Breast epithelium (tissue), 4 donors: ENCODE measurements at regions of chr6 and their contacts with region 1.

Region 1: DNA sequence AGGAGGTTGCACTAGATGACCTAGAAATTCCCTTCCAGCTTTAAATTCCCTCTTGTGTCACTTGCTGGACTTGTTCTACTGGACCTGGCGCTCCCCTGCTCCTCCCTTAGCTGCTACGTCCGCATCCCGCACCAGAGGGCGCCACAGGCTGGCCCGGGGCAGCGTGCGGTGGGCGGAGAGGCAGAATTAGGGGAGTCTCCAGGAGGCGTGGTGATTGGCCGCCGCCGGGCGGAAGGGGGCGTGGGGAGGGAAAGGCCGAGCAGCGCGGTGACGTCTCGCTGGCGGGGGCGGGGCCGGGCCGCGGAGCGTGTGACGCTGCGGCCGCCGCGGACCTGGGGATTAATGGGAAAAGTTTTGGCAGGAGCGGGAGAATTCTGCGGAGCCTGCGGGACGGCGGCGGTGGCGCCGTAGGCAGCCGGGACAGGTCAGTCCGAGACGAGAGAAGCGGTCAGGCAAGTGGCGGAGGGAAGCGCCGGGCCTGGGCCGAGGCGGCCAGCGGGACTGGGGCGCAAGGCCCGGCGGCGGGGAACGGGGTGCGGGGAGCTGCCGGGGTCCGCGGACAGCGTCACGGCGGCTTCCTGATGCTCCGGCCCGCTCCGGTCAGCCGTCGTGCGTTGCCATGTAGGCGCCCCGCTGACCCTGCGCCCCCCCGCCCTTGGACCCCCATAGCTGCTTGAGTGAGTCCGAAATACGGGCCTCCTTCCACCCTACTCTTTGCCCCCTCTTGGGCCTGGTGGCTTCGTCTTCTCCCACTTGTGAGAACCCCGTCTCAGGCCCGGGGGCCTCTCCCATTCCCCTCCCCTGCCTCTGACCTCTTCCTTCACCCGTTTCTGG is at the start of gene PPARD:
- DNase-seq: peak; percentile 99
- H3K4me3 ChIP-seq: peak within 1 kb of the TSS; percentile 86 to 94 (median 88)
- H3K27ac ChIP-seq: peak within 1 kb of the TSS; percentile 96
- H3K4me1 ChIP-seq: peaks cover 4 to 10% of the 10 kb centered on the region in 2 donors
- H3K27me3 ChIP-seq: no peaks in the 10 kb centered on the region
- CTCF ChIP-seq: peak; percentile 91 to 99 (median 99)
- POLR2A ChIP-seq: peak; percentile 56
- total RNA-seq, gene PPARD: 7.2 to 11.1 (median 10.7) TPM

Region 2: GRCh38 chr6:35452186-35453090 is 110.0 kb after region 1 on chr6 and contains the start of gene FANCE:
- intact Hi-C with region 1: loop called (anchors 5 kb)
- DNase-seq: peak; percentile 89 to 96
- H3K4me3 ChIP-seq: peak within 1 kb of the TSS; percentile 59 to 73 (median 63)
- H3K27ac ChIP-seq: peak within 1 kb of the TSS; percentile 30 to 66
- H3K4me1 ChIP-seq: no peaks in the 10 kb centered on the region
- H3K27me3 ChIP-seq: no peaks in the 10 kb centered on the region
- CTCF ChIP-seq: no peak
- POLR2A ChIP-seq: no peak
- total RNA-seq, gene FANCE: 9.7 to 12.6 (median 10.8) TPM

Region 3: GRCh38 chr6:35468181-35468979 is 125.9 kb after region 1 on chr6 and contains the start of gene RPL10A:
- intact Hi-C with region 1: loop called (anchors 5 kb)
- DNase-seq: peak; percentile 95 to 97
- H3K4me3 ChIP-seq: peak within 1 kb of the TSS; percentile 64 to 90 (median 89)
- H3K27ac ChIP-seq: peak within 1 kb of the TSS; percentile 87 to 89
- H3K4me1 ChIP-seq: peaks cover 0 to 17% of the 10 kb centered on the region in 2 donors
- H3K27me3 ChIP-seq: no peaks in the 10 kb centered on the region
- CTCF ChIP-seq: peak; percentile 92 to 97 (median 97)
- POLR2A ChIP-seq: peak; percentile 78
- total RNA-seq, gene RPL10A: 1,177 to 2,549 (median 2,082) TPM

Region 4: DNA sequence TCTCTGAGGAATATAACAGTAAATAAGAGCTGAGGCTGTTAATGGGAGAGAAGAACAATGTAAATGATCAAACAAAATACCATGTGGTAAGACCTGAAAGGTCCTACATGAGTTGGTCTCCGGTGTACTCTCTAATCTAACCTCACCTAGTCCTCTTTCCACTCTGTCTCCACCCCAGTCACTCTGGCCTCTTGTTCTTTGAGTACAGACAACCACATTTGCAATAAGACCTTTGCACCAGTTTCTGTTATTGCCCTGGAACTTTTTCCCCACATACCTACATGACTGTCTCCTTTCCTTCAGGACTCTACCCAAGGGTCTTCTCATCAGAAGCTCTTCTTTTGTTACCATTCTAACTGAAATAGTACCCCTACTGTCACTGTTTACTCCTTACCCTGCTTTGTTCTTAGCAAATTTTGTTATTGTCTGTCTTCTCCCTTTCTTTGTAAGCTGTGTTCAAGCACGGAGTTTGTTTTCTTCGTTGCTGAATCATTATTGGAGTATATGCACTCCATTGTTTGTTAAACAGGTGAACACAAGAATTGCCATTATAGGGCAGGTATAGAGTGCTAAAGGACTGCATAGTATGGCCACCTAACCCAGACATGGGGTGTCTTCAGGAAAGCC is 722.4 kb after region 1 on chr6:
- intact Hi-C with region 1: loop called (anchors 5 kb)
- DNase-seq: no peak
- H3K4me3 ChIP-seq: no peak overlapping the region
- H3K27ac ChIP-seq: no peak overlapping the region
- H3K4me1 ChIP-seq: no peaks in the 10 kb centered on the region
- H3K27me3 ChIP-seq: no peaks in the 10 kb centered on the region
- CTCF ChIP-seq: no peak
- POLR2A ChIP-seq: no peak